ENCODE measurements at regions of chr3 and their contacts with region 1.

Region 1: GRCh38 chr3:10983219-10983916 is 9.2 kb upstream of the SLC6A1 start:
- DNase-seq: no peak
- ATAC-seq: no peak

Region 2: DNA sequence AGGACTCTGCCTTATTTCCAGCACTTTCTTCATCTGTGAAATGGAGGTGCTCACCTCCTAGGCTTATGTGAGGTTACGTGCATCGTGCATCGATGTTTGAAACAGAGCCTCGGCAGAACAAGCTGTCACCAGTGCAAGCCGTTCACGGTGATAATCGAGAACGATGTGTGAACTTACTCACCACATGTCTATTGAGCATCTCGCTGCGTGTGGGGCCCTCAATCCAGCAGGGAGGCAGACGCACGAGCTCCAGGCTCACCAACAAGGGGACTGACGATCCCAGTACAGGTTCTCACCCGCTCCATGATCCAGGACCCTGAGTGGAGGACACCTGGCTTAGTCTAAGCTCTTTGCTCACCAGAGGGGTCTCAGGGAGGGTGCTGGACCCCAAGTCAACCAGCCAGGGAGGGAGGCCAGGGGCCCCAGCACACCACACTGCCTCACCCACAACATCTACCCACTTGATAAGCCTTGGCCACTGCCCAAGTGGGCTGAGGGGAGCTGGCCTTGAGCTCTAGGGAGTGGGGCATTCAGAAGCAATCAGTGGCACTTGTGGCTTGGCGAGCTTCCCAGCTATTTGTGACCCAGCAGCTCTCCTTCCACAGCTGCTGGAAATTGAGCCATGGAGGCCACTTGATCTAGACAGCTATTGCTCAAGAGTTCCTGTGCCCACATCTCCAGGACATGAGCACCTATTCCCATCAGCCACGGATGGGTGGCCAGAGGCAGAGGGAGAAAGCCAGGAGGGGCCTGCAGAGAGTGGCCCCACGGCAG is 25.2 kb before region 1 on chr3:
- intact Hi-C with region 1: loop called (anchors 2 kb)
- DNase-seq: peak; percentile 84
- ATAC-seq: peak; percentile 56

Measured in Right ventricle myocardium inferior (tissue), 1 donor.